GM12878 (cell line): ENCODE measurements at regions of chrX and their contacts with region 1.

Region 1: DNA sequence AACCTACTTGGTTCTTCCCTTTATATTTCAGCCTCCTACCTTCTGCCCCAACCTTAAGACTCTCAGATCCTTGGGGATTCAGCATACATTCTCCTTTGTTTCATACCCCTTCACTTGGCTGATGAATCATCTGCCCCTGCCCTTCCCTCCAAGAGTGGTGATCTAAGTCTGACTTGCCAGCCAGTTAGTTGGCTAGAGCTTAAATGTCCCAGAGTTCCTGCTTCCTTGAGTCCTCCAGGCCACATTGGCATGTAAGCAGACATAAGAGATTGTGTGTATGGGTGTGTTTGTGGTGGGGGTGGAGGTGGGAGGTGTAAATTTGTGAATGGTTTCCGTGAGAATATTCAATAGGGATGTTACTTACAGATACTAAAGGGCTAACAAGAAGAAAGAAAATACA is 3.7 kb upstream of the TEX13D start:
- DNase-seq: no peak
- ATAC-seq: no peak
- H3K4me3 ChIP-seq: no peak overlapping the region
- H3K27ac ChIP-seq: no peak overlapping the region
- H3K4me1 ChIP-seq: no peaks in the 10 kb centered on the region
- H3K27me3 ChIP-seq: no peaks in the 10 kb centered on the region
- CTCF ChIP-seq: no peak
- EP300 ChIP-seq: no peak
- POLR2A ChIP-seq: no peak
- RAD21 ChIP-seq: no peak

Region 2: DNA sequence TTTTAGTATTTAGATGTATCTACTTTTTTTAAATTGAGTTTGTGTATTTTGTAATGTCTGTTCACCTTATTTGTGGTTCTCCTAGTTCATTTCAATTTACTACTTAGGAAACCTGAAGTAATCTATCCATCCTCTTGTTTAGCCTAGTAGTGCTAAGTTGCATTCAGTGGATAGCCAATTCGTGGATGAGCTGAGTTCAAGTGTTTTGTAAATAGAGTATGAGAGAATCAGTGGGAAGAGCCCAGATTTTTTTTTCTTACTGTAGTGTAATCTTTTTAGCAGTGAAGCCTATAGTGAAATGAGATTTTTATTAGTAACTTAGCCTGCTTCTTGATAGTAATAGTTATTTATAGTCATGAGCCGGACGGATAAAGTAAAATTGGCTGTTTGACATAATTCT is 345.5 kb before region 1 on chrX:
- CTCF ChIA-PET with region 1: no interaction called
- POLR2A ChIA-PET with region 1: no interaction called
- RAD21 ChIA-PET with region 1: no interaction called
- SMC1A ChIA-PET with region 1: no interaction called
- in situ Hi-C with region 1: no loop called
- intact Hi-C with region 1: no loop called
- DNase-seq: no peak
- ATAC-seq: no peak
- H3K4me3 ChIP-seq: no peak overlapping the region
- H3K27ac ChIP-seq: 0 out of 2 replicates have a peak overlapping the region, but pooled peaks have one; percentile 11
- H3K4me1 ChIP-seq: no peaks in the 10 kb centered on the region
- H3K27me3 ChIP-seq: no peaks in the 10 kb centered on the region
- CTCF ChIP-seq: no peak
- EP300 ChIP-seq: no peak
- POLR2A ChIP-seq: no peak
- RAD21 ChIP-seq: no peak

Region 3: DNA sequence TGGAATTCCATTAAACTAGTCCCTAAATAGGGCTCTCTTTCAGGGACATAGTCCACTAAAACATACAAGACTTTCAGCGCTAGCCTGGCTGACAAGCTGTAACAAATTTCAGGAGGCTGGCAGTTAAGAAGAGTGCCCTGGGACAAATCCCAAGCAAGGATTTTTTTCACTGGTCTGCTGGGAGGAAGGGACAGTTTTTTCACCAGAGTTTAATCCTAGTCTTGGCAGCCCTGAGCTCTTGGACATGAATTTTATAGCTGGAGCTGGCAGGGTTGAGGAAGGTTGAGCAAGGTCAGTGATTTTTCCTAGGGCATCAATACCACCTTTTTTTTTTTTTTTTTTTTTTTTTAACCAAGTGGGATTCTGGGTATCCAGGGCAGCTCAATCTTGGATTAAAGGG is 202.0 kb after region 1 on chrX:
- CTCF ChIA-PET with region 1: no interaction called
- POLR2A ChIA-PET with region 1: no interaction called
- RAD21 ChIA-PET with region 1: no interaction called
- SMC1A ChIA-PET with region 1: no interaction called
- in situ Hi-C with region 1: no loop called
- intact Hi-C with region 1: loop called (anchors 10 kb)
- DNase-seq: no peak
- ATAC-seq: no peak
- H3K4me3 ChIP-seq: no peak overlapping the region
- H3K27ac ChIP-seq: no peak overlapping the region
- H3K4me1 ChIP-seq: no peaks in the 10 kb centered on the region
- H3K27me3 ChIP-seq: peaks cover 0 to 2% of the 10 kb centered on the region in 2 experiments; a peak in 1 of 4 replicates
- CTCF ChIP-seq: no peak
- EP300 ChIP-seq: no peak
- POLR2A ChIP-seq: no peak
- RAD21 ChIP-seq: no peak